ENCODE measurements at regions of chr2 and their contacts with region 1.

Region 1: GRCh38 chr2:174697255-174697654 is 67.0 kb downstream of the CHRNA1 start:
- DNase-seq: no peak
- ATAC-seq: peak; percentile 94
- H3K4me3 ChIP-seq: no peak overlapping the region
- H3K27ac ChIP-seq: no peak overlapping the region
- H3K4me1 ChIP-seq: no peaks in the 10 kb centered on the region
- H3K27me3 ChIP-seq: no peaks in the 10 kb centered on the region
- CTCF ChIP-seq: peak; percentile 78

Region 2: DNA sequence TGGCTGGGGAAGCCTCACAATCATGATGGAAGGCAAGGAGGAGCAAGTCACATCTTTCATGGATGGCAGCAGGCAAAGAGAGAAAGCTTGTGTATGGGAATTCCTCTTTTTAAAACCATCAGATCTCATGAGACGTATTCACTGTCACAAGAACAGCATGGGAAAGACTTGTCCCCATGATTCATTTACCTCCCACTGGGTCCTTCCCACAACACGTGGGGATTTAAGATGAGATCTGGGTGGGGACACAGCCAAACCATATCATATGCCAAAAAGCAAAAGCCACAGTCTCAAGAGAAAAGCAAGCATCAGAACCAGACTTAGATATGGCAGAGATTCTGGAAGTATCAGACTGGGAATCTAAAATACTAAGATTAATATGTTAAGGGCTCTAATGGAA is 331.7 kb before region 1 on chr2:
- intact Hi-C with region 1: no loop called
- DNase-seq: no peak
- ATAC-seq: no peak
- H3K4me3 ChIP-seq: no peak overlapping the region
- H3K27ac ChIP-seq: no peak overlapping the region
- H3K4me1 ChIP-seq: no peaks in the 10 kb centered on the region
- H3K27me3 ChIP-seq: no peaks in the 10 kb centered on the region
- CTCF ChIP-seq: no peak

Region 3: DNA sequence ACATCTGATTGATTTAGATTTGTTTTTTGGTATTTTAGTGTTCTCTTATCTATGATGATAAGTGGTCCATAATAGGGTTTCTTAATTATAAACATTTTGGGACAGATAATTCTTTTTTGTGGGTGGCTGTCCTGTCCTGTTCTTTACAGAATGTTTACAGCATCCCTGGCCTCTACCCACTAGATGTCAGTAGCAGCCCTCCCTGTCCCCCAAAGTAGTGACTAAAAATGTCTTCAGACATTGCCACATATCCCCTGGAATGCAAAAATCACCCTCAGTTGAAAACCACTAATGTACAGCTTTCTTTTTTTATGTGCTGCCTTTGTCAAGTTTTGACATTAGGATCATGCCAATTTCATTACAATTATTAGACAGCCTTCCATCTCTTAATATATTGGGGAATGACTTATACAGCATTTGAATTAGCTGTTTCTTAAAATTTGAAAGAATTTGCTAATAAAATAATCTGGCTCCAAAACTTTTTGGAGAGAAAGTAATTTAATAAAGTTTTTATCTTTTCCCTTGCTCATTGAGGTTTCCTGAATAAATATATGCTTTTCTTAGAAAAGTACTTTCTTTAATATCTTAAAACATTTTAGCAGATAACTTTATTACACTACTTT is 119.2 kb before region 1 on chr2:
- intact Hi-C with region 1: loop called (anchors 10 kb)
- DNase-seq: no peak
- ATAC-seq: peak; percentile 54
- H3K4me3 ChIP-seq: no peak overlapping the region
- H3K27ac ChIP-seq: no peak overlapping the region
- H3K4me1 ChIP-seq: peaks cover 10% of the 10 kb centered on the region
- H3K27me3 ChIP-seq: no peaks in the 10 kb centered on the region
- CTCF ChIP-seq: peak; percentile 46

Region 4: GRCh38 chr2:174615871-174616436 is 81.3 kb before region 1 on chr2:
- intact Hi-C with region 1: no loop called
- DNase-seq: no peak
- ATAC-seq: no peak
- H3K4me3 ChIP-seq: no peak overlapping the region
- H3K27ac ChIP-seq: no peak overlapping the region
- H3K4me1 ChIP-seq: peaks cover 20% of the 10 kb centered on the region
- H3K27me3 ChIP-seq: no peaks in the 10 kb centered on the region
- CTCF ChIP-seq: no peak

Measured in upper lobe of right lung (tissue), 1 donor.